ENCODE measurements at regions of chr11 and their contacts with region 1.

Region 1: DNA sequence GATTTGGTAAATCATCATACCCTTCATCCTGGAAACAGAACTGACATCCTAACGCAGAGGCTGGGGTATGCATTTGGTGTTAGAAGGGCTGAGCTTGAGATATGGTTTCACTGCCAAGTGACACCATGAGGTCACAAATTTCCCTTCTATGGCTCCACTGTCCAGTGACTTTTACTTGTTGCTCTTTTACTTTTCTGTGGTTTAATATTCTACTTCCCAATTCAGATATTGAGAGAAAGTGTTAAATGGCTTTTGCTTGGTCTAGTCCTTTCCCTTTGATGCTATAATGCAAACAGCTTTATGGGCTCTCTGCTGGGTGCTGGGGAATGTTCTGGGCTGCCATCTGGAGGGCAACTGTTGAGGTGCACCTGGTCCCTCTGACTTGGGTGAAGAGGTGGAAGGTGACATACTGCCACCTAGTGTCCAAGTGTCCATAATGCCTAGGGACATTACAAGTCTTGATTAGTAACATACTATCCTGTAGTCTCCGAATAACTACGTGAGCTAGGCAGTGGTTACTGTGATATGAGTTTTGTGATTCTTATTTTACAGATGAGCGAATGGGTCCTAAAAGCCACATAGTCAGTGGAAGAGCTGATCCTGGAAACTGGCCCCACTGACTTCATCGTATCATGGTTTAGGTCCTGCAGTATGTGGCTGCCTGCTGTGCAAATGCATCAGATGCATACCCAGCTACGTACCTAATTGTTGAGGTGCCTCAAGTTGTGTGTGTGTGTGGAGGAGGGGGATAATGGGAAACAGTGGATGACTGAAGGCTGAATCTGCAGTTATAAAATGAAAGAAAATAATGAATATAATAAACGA is 149.1 kb upstream of the RAG2 start:
- DNase-seq: peak; percentile 88
- H3K4me3 ChIP-seq: no peak overlapping the region
- H3K27ac ChIP-seq: no peak overlapping the region
- H3K27me3 ChIP-seq: peaks cover 10% of the 10 kb centered on the region
- CTCF ChIP-seq: peak; percentile 100

Region 2: GRCh38 chr11:36577859-36578258 is 169.2 kb before region 1 on chr11:
- CTCF ChIA-PET with region 1: interaction called, 12 read pairs
- POLR2A ChIA-PET with region 1: no interaction called
- DNase-seq: no peak
- H3K4me3 ChIP-seq: no peak overlapping the region
- H3K27ac ChIP-seq: no peak overlapping the region
- H3K27me3 ChIP-seq: no peaks in the 10 kb centered on the region
- CTCF ChIP-seq: no peak

Region 3: DNA sequence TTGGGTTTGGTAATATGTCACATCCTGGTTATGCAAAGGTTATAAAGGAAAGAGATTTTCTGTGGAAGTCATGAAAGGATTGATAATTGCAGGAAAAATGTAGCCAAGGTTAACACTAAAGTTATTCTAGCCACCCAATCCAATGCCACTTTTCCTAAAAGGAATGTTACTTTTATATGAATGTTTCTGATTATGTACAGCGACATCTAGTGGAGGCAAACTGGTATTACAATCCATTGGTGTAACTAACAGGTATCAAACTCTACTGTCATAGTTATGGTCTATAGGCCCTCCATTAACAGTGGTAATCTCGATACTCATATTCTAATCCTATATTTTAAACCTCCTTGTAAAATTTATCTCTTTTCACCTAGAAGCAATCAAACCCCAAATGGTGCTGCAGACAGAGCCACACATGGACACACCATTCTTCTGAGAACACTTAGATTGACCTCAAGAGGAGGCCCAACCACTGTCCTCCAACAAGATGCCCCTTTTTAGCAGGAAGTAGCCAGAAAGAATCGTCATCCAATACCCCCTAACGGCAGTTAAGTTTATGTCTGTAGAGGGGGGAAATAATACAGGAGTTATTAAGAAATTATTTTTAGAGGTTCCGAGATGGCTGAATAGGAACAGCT is 74.2 kb before region 1 on chr11:
- CTCF ChIA-PET with region 1: interaction called, 14 read pairs
- POLR2A ChIA-PET with region 1: no interaction called
- DNase-seq: peak; percentile 3
- H3K4me3 ChIP-seq: no peak overlapping the region
- H3K27ac ChIP-seq: no peak overlapping the region
- H3K27me3 ChIP-seq: no peaks in the 10 kb centered on the region
- CTCF ChIP-seq: peak; percentile 66

Region 4: DNA sequence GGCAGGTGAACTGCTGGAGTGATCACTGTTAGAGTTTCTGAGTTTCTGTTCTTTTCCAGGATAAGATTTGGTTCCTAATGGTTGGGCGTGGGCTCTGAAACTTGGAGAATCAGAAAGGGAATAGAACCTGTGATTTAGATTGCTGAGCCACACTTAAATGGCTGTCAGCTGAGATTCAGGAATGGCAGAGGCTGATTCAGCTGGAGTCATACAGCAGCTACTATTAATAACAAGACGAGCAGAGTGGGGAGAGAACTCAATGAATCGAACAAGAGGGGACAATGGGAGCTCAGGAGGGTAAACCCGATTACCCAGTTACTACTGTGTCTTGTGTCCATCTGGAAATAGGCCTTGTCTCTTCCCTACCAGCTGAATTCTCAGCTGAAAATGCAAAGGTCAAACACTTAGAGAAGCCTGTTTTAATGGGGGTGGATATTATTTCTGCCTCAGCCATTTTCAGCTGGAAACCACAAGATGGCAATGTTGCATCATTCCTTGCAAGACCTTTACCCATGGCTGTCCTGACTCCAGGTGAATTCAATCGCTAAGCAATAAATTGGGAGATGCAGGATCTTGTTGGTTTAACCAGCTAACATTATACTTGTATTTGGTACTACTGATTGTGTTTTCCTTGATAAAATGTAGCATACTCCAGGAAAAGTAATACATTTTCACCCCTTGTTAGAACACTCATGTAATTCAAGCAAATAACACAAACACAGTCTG is 44.6 kb before region 1 on chr11:
- CTCF ChIA-PET with region 1: interaction called, 205 read pairs
- POLR2A ChIA-PET with region 1: no interaction called
- DNase-seq: peak; percentile 30
- H3K4me3 ChIP-seq: no peak overlapping the region
- H3K27ac ChIP-seq: no peak overlapping the region
- H3K27me3 ChIP-seq: no peaks in the 10 kb centered on the region
- CTCF ChIP-seq: peak; percentile 76

Region 5: DNA sequence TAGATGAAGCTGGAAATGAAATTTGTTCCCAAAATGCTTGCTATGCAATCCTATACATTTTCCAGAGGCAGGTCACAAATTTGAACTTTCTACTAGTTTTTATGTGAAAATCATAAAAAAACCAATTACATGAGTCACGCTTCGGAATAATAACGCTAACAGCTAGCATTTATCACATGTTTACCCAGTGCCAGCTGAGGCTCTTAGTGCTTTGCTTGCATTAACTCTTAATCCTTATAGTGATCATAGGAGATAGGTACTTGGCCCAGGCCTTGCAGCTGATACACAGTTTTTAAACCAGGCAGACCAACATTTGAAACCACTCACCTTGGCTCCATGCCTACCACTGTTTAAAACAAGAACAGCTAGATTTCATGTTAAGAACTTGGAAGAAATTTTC is 17.3 kb before region 1 on chr11:
- CTCF ChIA-PET with region 1: interaction called, 200 read pairs
- POLR2A ChIA-PET with region 1: no interaction called
- DNase-seq: no peak
- H3K4me3 ChIP-seq: no peak overlapping the region
- H3K27ac ChIP-seq: no peak overlapping the region
- H3K27me3 ChIP-seq: no peaks in the 10 kb centered on the region
- CTCF ChIP-seq: no peak

Region 6: GRCh38 chr11:36774603-36775002 is 27.5 kb after region 1 on chr11:
- CTCF ChIA-PET with region 1: interaction called, 17 read pairs
- POLR2A ChIA-PET with region 1: no interaction called
- DNase-seq: no peak
- H3K4me3 ChIP-seq: no peak overlapping the region
- H3K27ac ChIP-seq: no peak overlapping the region
- H3K27me3 ChIP-seq: no peaks in the 10 kb centered on the region
- CTCF ChIP-seq: no peak